K562 (cell line): ENCODE measurements at regions of chr1 and their contacts with region 1.

Region 1: GRCh38 chr1:36542962-36543515 is 60.3 kb upstream of the CSF3R start:
- DNase-seq: peak in 2 of 4 experiments; percentile 42 to 45
- ATAC-seq: peak; percentile 95
- H3K4me3 ChIP-seq: no peak overlapping the region
- H3K27ac ChIP-seq: no peak overlapping the region
- H3K4me1 ChIP-seq: no peaks in the 10 kb centered on the region
- H3K27me3 ChIP-seq: peaks cover 6 to 12% of the 10 kb centered on the region in 2 experiments
- CTCF ChIP-seq: peak; percentile 49 to 71 (median 58)
- EP300 ChIP-seq: no peak
- POLR2A ChIP-seq: no peak
- RAD21 ChIP-seq: no peak; a peak in 1 of 4 replicates

Region 2: DNA sequence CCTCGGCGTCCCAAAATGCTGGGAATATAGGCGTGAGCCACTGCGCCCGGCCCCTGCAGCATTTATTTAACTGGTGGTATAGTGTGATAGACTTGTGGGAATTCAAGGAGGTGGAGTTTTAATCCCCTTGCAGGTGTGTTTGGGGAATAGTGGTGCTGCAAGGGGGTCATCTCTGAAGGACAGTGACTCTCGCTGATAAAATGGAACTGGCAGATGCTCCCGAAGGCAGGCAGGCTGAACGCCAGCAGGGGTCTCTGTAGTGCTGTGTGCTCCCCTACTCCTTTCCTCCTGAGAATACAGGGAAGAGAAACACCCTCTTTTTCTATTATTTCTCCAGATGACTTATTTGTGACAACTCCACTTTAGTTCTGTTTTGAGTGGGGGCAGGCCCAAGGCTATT is 96.8 kb before region 1 on chr1:
- CTCF ChIA-PET with region 1: no interaction called
- POLR2A ChIA-PET with region 1: no interaction called
- in situ Hi-C with region 1: no loop called
- intact Hi-C with region 1: loop called (anchors 10 kb)
- DNase-seq: peak; percentile 57 to 83 (median 70)
- ATAC-seq: peak; percentile 91
- H3K4me3 ChIP-seq: no peak overlapping the region
- H3K27ac ChIP-seq: no peak overlapping the region
- H3K4me1 ChIP-seq: peaks cover 14 to 19% of the 10 kb centered on the region in 2 experiments
- H3K27me3 ChIP-seq: no peaks in the 10 kb centered on the region
- CTCF ChIP-seq: peak; percentile 87 to 93 (median 92)
- EP300 ChIP-seq: no peak
- POLR2A ChIP-seq: no peak
- RAD21 ChIP-seq: peak; percentile 76 to 93